BJ (cell line): ENCODE measurements at regions of chr11 and their contacts with region 1.

Region 1: DNA sequence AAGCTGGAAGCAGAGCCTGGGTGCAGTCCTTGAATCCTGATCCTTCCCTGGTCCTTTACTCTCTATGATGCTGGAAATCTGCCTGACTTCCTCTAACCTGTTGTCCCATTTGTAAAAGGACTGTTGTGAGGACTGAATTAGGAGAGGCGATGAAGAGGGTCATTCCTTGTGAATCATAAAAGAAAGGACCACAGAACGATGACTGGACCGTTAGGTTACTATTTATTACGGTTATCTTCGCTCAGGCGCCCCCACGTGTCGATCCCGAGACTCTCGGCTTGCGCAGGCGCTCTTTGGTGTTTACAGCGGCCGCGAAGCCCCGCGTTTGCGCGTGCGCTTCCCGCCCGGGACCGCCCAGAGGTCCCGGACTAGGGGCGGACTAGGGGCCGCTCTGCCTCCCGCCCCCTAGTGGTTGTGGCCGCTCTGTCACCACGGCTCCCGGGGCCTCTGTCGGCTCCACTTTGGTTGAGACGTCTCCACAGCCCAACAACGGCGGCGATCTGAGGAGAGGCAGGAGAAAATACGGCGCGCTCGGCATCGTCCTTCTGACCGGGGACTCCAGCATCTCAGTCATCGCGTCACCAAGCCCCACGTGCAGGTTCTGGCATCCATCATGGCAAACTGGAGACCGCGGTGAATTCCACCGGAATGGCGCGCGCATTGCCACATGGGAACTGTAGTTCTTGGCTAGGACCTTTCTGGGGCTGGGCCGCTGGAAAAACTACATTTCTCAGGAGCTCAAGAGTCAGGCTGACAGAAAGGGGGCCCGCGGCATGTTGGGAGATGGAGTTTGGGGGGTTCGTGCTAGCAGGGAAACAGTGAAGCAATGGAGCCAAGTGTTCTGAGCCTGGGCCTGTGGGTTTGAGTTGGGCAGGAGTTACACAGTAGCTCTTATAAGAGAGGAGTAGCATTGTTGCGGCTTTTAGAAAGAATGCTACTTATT is at the start of gene STARD10:
- DNase-seq: peak; percentile 64
- H3K4me3 ChIP-seq: peak within 1 kb of the TSS; percentile 68
- H3K27me3 ChIP-seq: no peaks in the 10 kb centered on the region
- CTCF ChIP-seq: peak; percentile 98
- polyA plus RNA-seq, gene STARD10: 25.4 and 37.1 TPM in 2 replicates

Region 2: DNA sequence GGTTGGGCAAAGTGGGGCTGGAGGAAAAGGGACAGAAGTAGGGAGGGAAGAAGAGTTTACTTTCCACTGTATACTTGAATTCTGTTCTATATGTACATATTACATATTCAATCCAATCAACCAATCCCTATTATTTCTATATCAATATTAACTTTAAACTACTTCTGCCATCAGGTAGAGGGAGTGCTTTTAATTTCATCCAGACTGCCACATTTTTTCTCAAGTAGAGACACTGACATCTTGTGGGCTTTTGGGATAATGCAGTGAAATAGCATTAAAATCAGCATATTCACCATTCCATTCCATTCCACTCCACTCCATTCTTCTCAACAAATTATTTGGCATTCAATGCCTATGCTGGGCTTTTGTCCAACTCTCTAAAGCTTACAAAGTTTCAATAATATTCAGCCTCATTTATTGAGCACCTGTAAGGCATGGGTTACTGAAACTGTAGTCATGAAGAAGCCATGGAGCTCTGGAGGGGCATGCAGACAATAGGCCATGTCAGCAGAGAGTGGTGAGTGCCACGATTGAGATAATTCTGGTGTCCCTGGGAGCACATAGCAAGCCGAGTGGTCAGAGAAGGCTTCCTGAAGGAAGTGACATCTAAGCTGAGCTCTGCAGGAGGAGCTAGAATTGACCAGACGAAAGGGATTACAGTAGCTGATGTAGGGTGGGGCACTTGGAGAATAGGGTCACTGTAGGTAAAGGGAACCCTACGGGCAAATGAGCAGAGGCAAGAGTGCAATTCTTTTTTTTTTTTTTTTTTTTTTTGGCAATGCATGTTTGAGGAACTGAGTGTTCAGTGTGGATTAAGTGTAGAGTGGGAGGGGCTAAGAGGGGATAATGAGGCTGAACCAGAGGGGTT is 346.6 kb before region 1 on chr11:
- CTCF ChIA-PET with region 1: no interaction called
- POLR2A ChIA-PET with region 1: no interaction called
- DNase-seq: no peak
- H3K4me3 ChIP-seq: no peak overlapping the region
- H3K27me3 ChIP-seq: peaks cover 7% of the 10 kb centered on the region; the same call in 1 of the 2 replicates
- CTCF ChIP-seq: peak; percentile 82

Region 3: GRCh38 chr11:72772978-72773690 is 20.6 kb before region 1 on chr11:
- CTCF ChIA-PET with region 1: interaction called, 26 read pairs
- POLR2A ChIA-PET with region 1: no interaction called
- DNase-seq: no peak
- H3K4me3 ChIP-seq: no peak overlapping the region
- H3K27me3 ChIP-seq: no peaks in the 10 kb centered on the region
- CTCF ChIP-seq: no peak

Region 4: GRCh38 chr11:72781313-72782050 is 12.2 kb before region 1 on chr11:
- CTCF ChIA-PET with region 1: interaction called, 27 read pairs
- POLR2A ChIA-PET with region 1: no interaction called
- DNase-seq: no peak
- H3K4me3 ChIP-seq: peak overlapping the region; percentile 46
- H3K27me3 ChIP-seq: 0 out of 2 replicates have a peak, but pooled peaks cover 1% of the 10 kb centered on the region
- CTCF ChIP-seq: no peak

Region 5: DNA sequence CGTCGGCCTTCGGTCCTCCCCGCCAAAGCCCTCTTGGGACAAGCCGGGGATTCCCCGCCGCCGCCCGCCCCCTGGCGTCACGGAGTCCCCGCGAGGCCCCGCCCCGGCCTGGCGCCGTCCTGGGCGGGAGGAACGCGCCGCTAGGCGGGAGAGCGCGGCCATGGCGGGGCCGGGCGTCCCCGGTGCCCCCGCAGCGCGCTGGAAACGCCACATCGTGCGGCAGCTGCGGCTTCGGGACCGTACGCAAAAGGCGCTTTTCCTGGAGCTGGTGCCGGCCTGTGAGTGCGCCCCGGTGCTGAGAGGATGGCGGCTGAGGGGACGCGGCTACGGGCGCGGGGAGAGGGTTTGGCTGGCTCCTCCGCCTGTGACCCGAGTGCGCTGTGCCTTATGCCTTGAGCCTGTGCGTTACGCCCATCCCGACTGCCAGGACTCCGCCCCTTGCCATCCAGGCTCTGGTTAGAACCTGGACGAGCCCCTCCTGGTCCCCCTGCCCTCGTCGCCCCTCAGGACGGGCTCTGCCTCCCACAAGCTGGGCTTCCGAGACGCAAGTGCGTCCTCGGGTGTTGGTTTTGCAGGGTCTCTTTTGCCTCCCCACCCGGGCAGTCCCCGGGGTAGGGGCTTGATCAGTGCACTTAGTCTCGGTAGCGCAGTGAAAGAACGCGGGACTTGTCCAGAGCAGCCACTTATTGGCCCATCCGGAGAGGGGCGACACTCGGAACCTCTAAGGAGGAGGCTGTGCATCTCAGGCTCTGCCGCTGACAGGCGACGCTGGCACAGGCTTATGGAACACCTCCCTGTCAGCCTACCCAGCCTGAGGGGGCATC is 20.8 kb after region 1 on chr11 and contains the start of gene ATG16L2:
- CTCF ChIA-PET with region 1: interaction called, 20 read pairs
- POLR2A ChIA-PET with region 1: interaction called, 5 read pairs
- DNase-seq: no peak
- H3K4me3 ChIP-seq: peak within 1 kb of the TSS; percentile 68
- H3K27me3 ChIP-seq: no peaks in the 10 kb centered on the region
- CTCF ChIP-seq: peak; percentile 31
- polyA plus RNA-seq, gene ATG16L2: 8.3 and 10.1 TPM in 2 replicates